ENCODE measurements at regions of chr6 and their contacts with region 1.

Region 1: GRCh38 chr6:133368664-133369063 is 127.5 kb downstream of the EYA4 start:
- DNase-seq: peak; percentile 38 to 81
- ATAC-seq: peak; percentile 96 to 99 (median 98)
- H3K4me3 ChIP-seq: no peak overlapping the region
- H3K27ac ChIP-seq: peak overlapping the region; percentile 86
- H3K4me1 ChIP-seq: peaks cover 54% of the 10 kb centered on the region
- H3K27me3 ChIP-seq: no peaks in the 10 kb centered on the region
- CTCF ChIP-seq: peak; percentile 50

Region 2: GRCh38 chr6:133184798-133185372 is 183.8 kb before region 1 on chr6:
- intact Hi-C with region 1: loop called (anchors 5 kb)
- DNase-seq: no peak
- ATAC-seq: peak in 3 of 4 donors; percentile 19 to 60 (median 44)
- H3K4me3 ChIP-seq: no peak overlapping the region
- H3K27ac ChIP-seq: no peak overlapping the region
- H3K4me1 ChIP-seq: no peaks in the 10 kb centered on the region
- H3K27me3 ChIP-seq: no peaks in the 10 kb centered on the region
- CTCF ChIP-seq: peak; percentile 67

Region 3: GRCh38 chr6:133191323-133191722 is 177.3 kb before region 1 on chr6:
- intact Hi-C with region 1: loop called (anchors 5 kb)
- DNase-seq: no peak
- ATAC-seq: peak in 2 of 4 donors; percentile 70
- H3K4me3 ChIP-seq: no peak overlapping the region
- H3K27ac ChIP-seq: no peak overlapping the region
- H3K4me1 ChIP-seq: peaks cover 11% of the 10 kb centered on the region
- H3K27me3 ChIP-seq: no peaks in the 10 kb centered on the region
- CTCF ChIP-seq: no peak

Region 4: GRCh38 chr6:133241086-133241900 is 127.4 kb before region 1 on chr6 and contains the start of gene EYA4:
- intact Hi-C with region 1: loop called (anchors 5 kb)
- DNase-seq: peak; percentile 60 to 85
- ATAC-seq: peak; percentile 65 to 80 (median 70)
- H3K4me3 ChIP-seq: peak within 1 kb of the TSS; percentile 93
- H3K27ac ChIP-seq: peak within 1 kb of the TSS; percentile 99
- H3K4me1 ChIP-seq: peaks cover 24% of the 10 kb centered on the region
- H3K27me3 ChIP-seq: no peaks in the 10 kb centered on the region
- CTCF ChIP-seq: no peak
- total RNA-seq, gene EYA4: 32.8 to 48.3 (median 37.4) TPM

Region 5: GRCh38 chr6:133248241-133249001 is 120.2 kb before region 1 on chr6:
- intact Hi-C with region 1: loop called (anchors 5 kb)
- DNase-seq: no peak
- ATAC-seq: no peak
- H3K4me3 ChIP-seq: no peak overlapping the region
- H3K27ac ChIP-seq: no peak overlapping the region
- H3K4me1 ChIP-seq: peaks cover 49% of the 10 kb centered on the region
- H3K27me3 ChIP-seq: no peaks in the 10 kb centered on the region
- CTCF ChIP-seq: no peak

Region 6: DNA sequence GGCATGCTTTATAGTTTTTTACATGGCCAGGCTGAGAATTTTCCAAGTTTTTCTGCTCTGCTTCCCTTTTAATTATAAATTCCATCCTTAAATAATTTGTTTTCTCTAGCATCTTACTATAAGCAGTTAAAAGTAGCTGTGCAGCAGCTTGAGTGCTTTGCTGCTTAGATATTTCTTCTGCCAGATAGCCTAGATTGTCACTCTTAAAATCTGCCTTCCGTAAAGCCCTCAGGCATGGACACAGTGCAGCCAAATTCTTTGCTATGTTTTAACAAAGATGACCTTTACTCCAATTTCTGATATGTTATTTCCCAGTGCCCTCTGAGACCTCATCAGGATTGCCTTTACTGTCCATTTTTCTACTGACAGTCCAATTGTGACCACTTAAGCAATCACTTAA is 1041.9 kb after region 1 on chr6:
- intact Hi-C with region 1: no loop called
- DNase-seq: no peak
- ATAC-seq: no peak
- H3K4me3 ChIP-seq: no peak overlapping the region
- H3K27ac ChIP-seq: no peak overlapping the region
- H3K4me1 ChIP-seq: no peaks in the 10 kb centered on the region
- H3K27me3 ChIP-seq: no peaks in the 10 kb centered on the region
- CTCF ChIP-seq: no peak

Measured in psoas muscle (tissue), 8 donors.